Cardiac septum (tissue), 1 donor: ENCODE measurements at regions of chr7 and their contacts with region 1.

Region 1: DNA sequence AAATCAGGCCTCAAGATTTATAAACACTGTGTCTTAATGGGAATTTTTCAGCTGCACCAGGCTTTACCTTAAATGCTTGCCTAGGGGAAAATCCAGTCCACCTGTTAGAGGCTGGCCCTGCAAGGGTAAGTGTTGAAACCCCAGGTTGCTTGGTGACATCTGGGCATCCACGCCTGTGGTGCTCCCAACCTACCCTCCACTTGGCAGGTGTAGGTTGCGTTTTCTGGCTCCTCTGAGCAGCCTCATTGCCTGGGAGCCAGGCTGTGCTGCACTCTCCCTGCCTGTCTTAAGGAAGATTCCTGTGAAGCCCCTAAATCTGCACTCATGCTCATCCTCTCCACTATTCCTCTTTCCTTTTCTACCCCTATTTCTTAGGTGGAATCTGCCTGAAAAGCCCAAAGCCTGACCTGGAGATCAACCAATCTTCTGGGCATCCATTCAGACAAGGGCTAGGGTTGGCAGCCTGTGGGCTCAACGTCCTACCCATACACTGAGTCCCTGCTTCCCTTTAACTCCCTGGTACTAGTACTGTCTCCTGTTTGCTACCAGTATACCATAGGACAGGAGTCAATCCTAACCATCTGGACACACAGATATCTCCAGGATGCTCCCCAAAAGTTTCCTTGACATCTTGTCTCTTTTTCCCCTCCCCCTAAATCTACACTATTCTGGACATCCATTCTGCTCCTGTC is 150.4 kb downstream of the PDE1C start:
- DNase-seq: no peak

Region 2: GRCh38 chr7:31857172-31857571 is 62.7 kb before region 1 on chr7:
- intact Hi-C with region 1: no loop called
- DNase-seq: no peak

Region 3: DNA sequence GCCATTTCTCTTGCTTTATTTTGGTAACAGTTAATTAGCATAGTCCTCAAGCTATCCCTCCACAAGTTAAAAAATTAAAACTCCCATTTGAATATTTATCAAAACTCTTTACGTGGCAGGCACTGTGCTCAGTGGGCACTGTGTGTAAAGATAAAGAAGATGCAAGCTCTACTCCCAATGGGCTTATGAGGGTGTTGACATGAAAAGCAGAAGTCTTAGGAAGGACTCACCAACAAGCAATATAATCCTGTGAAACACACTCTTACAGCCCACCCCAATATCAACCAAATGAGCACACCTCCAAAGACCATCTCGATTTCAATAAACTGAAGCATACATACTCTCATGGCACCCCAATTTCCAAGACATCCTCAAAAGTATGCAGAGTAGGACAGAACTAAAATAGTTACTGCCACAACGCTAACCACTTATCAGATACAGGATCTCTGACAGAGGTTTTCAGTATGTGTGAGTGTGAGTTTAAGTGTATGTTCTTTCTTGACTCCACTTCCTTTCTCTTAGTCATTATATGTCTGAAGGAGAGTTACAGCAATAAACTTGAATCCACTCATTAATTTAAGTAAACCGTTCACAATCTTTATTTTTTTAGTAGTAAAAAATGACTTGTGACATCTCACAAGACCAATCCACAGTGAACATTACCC is 30.4 kb after region 1 on chr7:
- intact Hi-C with region 1: loop called (anchors 5 kb)
- DNase-seq: no peak